ENCODE measurements at regions of chr15 and their contacts with region 1.

Region 1: DNA sequence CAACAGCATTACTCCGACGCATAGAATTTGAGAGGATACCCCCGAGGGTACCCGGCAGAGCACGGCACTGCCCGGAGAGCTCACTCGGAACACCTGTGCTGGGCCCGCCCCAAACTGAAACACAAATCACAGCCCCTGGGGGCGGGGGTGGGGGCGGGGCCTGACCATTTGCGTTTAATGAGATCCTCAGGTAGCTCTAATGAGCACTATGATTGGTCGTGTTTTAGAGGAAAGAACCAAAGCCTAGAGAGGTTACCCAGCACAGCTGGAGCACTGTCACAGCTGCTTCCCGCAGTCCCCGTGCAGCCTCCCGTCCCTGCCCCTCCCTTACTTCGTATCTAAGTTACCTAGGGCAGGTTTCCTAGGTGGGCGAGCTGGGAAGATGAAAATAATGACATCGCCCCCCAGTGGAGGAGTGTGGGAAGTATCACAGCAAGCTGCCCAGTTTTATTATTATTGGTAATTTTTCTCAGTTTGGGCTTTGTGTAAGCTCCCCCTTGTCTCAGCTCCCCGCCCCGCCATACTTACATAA is 187.1 kb downstream of the PDE8A start:
- DNase-seq: no peak
- H3K4me3 ChIP-seq: peak overlapping the region; percentile 1 to 56 (median 22)
- H3K27ac ChIP-seq: no peak overlapping the region
- H3K4me1 ChIP-seq: peaks cover 0 to 21% (median 3%) of the 10 kb centered on the region in 3 donors
- H3K27me3 ChIP-seq: peaks cover 0 to 39% (median 0%) of the 10 kb centered on the region in 4 donors
- CTCF ChIP-seq: peak in 5 of 6 experiments; percentile 20 to 56 (median 34)
- POLR2A ChIP-seq: no peak

Region 2: DNA sequence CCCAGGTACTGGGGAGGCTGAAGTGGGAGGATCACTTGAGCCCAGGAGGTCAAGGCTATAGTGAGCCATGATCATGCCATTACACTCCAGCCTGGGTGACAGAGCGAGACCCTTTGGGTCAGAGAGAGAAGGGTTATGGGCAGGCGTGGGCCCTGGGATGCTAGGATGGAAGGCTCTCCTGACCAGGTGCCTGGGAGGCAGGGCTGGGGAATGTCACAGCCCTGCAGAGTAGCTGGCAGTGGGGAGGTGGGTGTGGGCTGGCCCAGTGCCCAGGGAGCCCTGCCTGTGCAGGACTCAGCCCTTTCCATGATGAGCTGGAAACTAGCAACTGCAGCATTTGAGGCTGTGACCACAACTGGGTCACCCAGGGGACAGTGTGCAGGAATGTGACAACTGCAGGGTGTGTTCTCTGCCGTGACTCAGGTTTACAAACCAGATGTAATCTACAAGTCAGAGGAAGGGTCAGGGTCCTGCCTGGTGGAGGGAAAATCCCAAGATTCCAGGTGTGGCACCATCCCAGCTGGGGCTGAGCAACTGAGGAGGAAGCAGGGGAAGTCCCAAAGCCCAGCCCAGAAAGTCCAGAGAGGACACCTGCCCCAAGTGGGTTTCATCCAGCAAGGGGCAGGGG is 238.8 kb before region 1 on chr15:
- intact Hi-C with region 1: no loop called
- DNase-seq: no peak
- H3K4me3 ChIP-seq: no peak overlapping the region
- H3K27ac ChIP-seq: peak overlapping the region in 1 of 4 donors; percentile 29
- H3K4me1 ChIP-seq: peaks cover 6 to 25% (median 9%) of the 10 kb centered on the region in 3 donors
- H3K27me3 ChIP-seq: no peaks in the 10 kb centered on the region
- CTCF ChIP-seq: no peak
- POLR2A ChIP-seq: no peak

Region 3: DNA sequence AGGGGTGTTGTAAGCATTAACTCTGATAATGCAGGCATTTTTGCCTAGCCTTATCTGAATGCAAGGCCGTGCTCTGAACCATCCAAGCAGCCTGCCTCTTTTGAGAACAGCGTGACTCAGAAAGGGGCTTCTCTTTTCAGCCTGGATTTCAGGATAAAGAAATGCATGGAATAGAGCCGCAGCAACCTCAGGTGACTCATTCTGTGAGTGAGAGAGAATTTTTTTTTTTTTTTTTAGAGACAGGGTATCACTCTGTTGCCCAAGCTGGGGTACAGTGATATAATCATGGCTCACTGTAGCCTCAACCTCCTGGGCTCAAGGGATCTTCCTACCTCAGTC is 207.6 kb before region 1 on chr15:
- intact Hi-C with region 1: loop called (anchors 10 kb)
- DNase-seq: no peak
- H3K4me3 ChIP-seq: no peak overlapping the region
- H3K27ac ChIP-seq: no peak overlapping the region
- H3K4me1 ChIP-seq: peaks cover 0 to 10% (median 0%) of the 10 kb centered on the region in 3 donors
- H3K27me3 ChIP-seq: no peaks in the 10 kb centered on the region
- CTCF ChIP-seq: no peak
- POLR2A ChIP-seq: no peak

Region 4: DNA sequence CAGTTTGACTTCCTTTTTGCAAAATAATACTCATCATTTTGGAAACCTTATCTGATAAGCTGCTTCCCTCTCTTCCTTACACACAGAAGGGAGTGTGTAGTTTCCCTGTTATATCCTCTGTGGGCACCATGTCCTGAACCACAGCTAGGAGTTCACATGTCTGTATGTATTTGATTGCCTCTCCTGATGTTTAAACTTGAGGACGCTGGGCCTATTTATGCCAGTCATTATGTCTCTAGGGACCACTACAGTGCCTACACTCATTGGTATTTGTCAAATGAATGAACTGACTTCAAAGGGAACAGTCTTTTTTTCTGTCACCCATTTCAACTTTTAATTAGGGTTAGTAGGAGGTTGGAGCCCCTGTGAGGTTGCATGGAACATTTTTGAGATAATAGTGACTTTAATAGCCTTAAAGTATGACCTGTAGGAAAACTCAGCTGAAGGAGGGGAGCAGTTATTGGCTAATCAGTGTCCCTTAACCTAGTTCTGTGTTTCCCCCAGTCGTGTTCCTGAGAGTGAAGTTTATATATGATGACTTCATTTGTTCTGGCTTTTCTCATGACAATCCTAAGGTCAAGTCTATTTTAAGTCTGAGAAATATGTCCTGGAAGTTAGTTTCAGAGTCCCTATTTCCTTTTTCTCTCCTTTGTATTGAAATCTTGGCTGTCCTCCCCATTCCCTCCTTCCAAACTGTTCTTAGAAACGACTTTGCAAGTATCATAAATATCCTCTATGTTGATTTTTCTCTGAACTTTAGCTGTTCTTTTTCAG is 158.1 kb before region 1 on chr15:
- intact Hi-C with region 1: no loop called
- DNase-seq: no peak
- H3K4me3 ChIP-seq: no peak overlapping the region
- H3K27ac ChIP-seq: peak overlapping the region in 3 of 4 donors; percentile 11 to 67 (median 26)
- H3K4me1 ChIP-seq: peaks cover 0 to 46% (median 23%) of the 10 kb centered on the region in 3 donors
- H3K27me3 ChIP-seq: no peaks in the 10 kb centered on the region
- CTCF ChIP-seq: peak in 1 of 6 experiments; percentile 53
- POLR2A ChIP-seq: no peak